Cardiac septum (tissue), 1 donor: ENCODE measurements at regions of chr6 and their contacts with region 1.

Region 1: GRCh38 chr6:93779086-93779841 is 359.9 kb upstream of the EPHA7 start:
- DNase-seq: peak; percentile 77

Region 2: GRCh38 chr6:93678841-93679454 is 100.3 kb before region 1 on chr6:
- intact Hi-C with region 1: no loop called
- DNase-seq: no peak

Region 3: DNA sequence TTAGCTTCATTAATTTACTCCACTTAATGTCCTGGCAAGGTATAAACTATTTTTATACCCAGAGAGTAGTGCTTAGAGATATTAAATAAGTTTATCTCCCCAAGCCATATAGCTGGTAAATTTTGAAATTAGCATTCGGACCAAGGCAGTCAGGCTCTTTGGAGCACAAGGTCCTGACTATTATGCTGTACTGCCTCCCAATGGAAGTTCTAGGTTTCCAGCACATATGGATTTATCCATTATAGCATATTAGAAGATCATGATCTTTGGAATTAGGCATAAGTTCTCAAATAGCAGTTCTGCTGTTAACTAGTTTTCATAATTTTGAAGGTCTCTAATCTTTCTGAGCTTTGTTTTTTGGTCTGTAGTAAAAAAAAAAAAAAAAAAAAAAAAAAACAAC is 475.4 kb after region 1 on chr6:
- intact Hi-C with region 1: loop called (anchors 5 kb)
- DNase-seq: no peak